GM12878 (cell line): ENCODE measurements at regions of chr13 and their contacts with region 1.

Region 1: DNA sequence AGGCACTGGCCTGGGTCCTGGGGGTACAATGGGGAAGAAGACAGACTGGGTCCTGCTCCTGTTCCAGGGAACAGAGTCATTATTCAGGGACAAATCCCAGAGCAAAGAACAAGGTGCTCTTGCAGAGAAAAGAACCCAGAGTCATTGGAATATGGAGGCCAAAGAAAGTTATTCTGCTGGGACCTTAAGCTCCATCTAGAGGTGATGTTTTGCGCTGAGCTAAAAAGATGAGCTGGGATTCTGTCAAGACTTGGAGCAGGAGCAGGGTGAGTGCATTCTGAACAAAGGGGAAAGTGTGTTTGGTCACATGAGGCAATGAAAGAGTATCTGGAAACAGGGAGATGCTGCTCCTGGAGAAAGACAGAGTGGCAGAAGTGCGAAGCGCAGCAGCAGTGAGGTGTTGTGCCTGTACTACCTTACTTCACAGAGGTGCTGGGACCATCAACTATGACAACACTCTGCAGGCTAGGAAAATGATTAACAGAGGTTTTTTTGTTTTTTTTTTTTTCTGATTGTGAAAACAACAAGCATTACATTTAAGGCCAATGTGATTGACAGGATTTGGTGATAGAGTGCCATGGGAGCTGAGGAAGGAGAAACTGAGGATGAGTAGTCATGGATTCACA is 95.3 kb upstream of the TNFSF11 start:
- DNase-seq: no peak
- ATAC-seq: peak; percentile 90
- H3K4me3 ChIP-seq: no peak overlapping the region
- H3K27ac ChIP-seq: no peak overlapping the region
- H3K4me1 ChIP-seq: 0 out of 2 replicates have a peak, but pooled peaks cover 3% of the 10 kb centered on the region
- H3K27me3 ChIP-seq: no peaks in the 10 kb centered on the region
- CTCF ChIP-seq: peak; percentile 46 to 58 (median 47); a peak in 5 of 6 replicates
- EP300 ChIP-seq: no peak
- POLR2A ChIP-seq: no peak
- RAD21 ChIP-seq: peak; percentile 83

Region 2: GRCh38 chr13:41543664-41544300 is 934.9 kb before region 1 on chr13:
- CTCF ChIA-PET with region 1: no interaction called
- POLR2A ChIA-PET with region 1: no interaction called
- RAD21 ChIA-PET with region 1: no interaction called
- SMC1A ChIA-PET with region 1: no interaction called
- in situ Hi-C with region 1: no loop called
- intact Hi-C with region 1: no loop called
- DNase-seq: no peak
- ATAC-seq: no peak
- H3K4me3 ChIP-seq: no peak overlapping the region
- H3K27ac ChIP-seq: no peak overlapping the region
- H3K4me1 ChIP-seq: no peaks in the 10 kb centered on the region
- H3K27me3 ChIP-seq: no peaks in the 10 kb centered on the region
- CTCF ChIP-seq: no peak
- EP300 ChIP-seq: no peak
- POLR2A ChIP-seq: no peak
- RAD21 ChIP-seq: no peak

Region 3: GRCh38 chr13:42271337-42272114 is 207.1 kb before region 1 on chr13:
- CTCF ChIA-PET with region 1: interaction called, 5 read pairs
- POLR2A ChIA-PET with region 1: no interaction called
- RAD21 ChIA-PET with region 1: interaction called, 4 read pairs
- SMC1A ChIA-PET with region 1: interaction called, 21 read pairs
- in situ Hi-C with region 1: no loop called
- intact Hi-C with region 1: no loop called
- DNase-seq: peak; percentile 94
- ATAC-seq: peak; percentile 83
- H3K4me3 ChIP-seq: peak overlapping the region; percentile 90
- H3K27ac ChIP-seq: peak overlapping the region; percentile 77
- H3K4me1 ChIP-seq: peaks cover 12% of the 10 kb centered on the region
- H3K27me3 ChIP-seq: no peaks in the 10 kb centered on the region
- CTCF ChIP-seq: no peak
- EP300 ChIP-seq: peak in 1 of 2 experiments; percentile 65; a peak in 1 of 4 replicates
- POLR2A ChIP-seq: no peak
- RAD21 ChIP-seq: no peak

Region 4: GRCh38 chr13:42333613-42334328 is 144.9 kb before region 1 on chr13:
- CTCF ChIA-PET with region 1: interaction called, 67 read pairs
- POLR2A ChIA-PET with region 1: interaction called, 4 read pairs
- RAD21 ChIA-PET with region 1: interaction called, 85 read pairs
- SMC1A ChIA-PET with region 1: interaction called, 83 read pairs
- in situ Hi-C with region 1: no loop called
- intact Hi-C with region 1: loop called (anchors 1 kb)
- DNase-seq: no peak
- ATAC-seq: peak; percentile 92
- H3K4me3 ChIP-seq: no peak overlapping the region
- H3K27ac ChIP-seq: peak overlapping the region; percentile 73
- H3K4me1 ChIP-seq: peaks cover 18% of the 10 kb centered on the region
- H3K27me3 ChIP-seq: no peaks in the 10 kb centered on the region
- CTCF ChIP-seq: peak; percentile 74 to 87 (median 83); a peak in 5 of 6 replicates
- EP300 ChIP-seq: no peak
- POLR2A ChIP-seq: no peak
- RAD21 ChIP-seq: peak; percentile 98

Region 5: DNA sequence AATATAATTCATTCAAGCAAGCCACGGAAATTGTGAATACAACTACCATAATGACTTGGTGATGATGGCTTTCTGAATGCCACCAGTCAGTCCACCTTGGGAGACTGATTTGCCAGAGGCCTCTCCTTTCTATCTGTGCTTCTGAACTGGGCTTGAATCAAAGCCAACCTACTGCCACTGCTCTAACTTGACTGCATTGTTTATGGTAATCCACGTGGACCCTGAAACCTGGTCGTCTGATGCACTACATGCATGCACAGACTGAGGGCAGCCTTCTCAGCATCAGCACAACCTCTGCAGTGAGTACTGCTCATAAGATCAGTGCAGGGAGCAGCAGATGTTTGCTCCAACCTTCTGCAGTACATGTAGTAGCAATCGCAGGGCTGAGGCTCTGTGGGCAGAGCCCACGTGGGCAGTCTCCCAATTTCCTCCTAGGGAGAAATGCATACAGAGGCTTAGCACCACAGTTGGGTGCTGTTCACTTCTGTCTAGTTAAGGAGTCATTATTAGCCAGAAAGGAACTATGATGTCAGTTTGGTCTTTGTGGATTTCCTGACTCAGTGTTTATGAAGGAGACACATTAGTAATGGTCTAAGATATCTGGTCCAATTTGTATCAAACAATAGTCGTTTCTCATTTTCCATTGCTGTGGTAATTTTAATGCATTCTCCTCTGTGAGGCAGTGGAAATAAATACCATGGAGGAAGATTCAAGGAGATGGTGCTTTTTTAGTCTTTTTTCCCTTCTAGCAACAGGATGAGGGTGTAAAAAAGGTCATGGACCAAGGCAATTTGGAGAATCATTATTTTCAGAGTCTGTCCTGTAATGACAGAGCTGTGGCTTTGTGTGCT is 124.2 kb before region 1 on chr13:
- CTCF ChIA-PET with region 1: interaction called, 12 read pairs
- POLR2A ChIA-PET with region 1: interaction called, 3 read pairs
- RAD21 ChIA-PET with region 1: interaction called, 6 read pairs
- SMC1A ChIA-PET with region 1: interaction called, 15 read pairs
- in situ Hi-C with region 1: no loop called
- intact Hi-C with region 1: no loop called
- DNase-seq: peak; percentile 53
- ATAC-seq: peak; percentile 92
- H3K4me3 ChIP-seq: no peak overlapping the region
- H3K27ac ChIP-seq: peak overlapping the region; percentile 52
- H3K4me1 ChIP-seq: peaks cover 18% of the 10 kb centered on the region
- H3K27me3 ChIP-seq: no peaks in the 10 kb centered on the region
- CTCF ChIP-seq: peak; percentile 23 to 49 (median 46); a peak in 5 of 6 replicates
- EP300 ChIP-seq: no peak
- POLR2A ChIP-seq: no peak
- RAD21 ChIP-seq: peak; percentile 56

Region 6: DNA sequence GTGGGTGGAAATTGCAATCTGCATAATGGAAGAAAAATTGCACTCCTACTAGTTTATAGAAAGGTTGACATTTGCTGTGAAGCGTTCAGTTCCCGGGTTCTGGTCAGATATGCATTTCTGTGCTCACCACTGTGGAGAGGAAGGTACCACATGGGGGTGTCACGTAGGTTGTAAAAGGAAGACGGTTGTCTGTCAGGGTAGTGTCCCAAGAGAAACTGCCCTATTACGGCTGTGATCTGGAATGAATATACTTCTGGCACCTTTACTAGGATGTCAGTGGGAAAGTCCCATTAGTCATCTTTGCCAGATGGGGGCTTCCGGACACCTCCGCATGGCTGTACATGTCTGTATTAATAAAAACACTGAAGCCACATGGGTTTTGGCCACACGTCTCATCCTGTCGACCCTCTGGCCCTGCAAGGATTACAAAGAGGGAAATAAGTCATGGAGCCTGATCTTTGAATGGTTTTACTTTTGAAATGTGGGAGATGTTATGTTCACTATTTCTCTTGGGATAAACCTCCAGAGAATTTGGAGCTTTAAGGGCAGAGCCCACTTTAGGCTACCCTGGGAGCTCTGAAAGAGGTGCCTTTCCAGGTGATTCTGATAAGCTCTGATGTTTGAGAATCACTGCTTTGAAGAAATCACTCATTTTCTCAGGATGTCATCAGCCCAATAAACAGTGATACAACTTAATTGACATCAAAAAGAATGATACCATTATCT is 72.8 kb before region 1 on chr13:
- CTCF ChIA-PET with region 1: interaction called, 15 read pairs
- POLR2A ChIA-PET with region 1: no interaction called
- RAD21 ChIA-PET with region 1: interaction called, 12 read pairs
- SMC1A ChIA-PET with region 1: interaction called, 11 read pairs
- in situ Hi-C with region 1: no loop called
- intact Hi-C with region 1: loop called (anchors 5 kb)
- DNase-seq: peak; percentile 97
- ATAC-seq: peak; percentile 90
- H3K4me3 ChIP-seq: peak overlapping the region; percentile 31; the same call in 1 of the 2 replicates
- H3K27ac ChIP-seq: peak overlapping the region; percentile 98
- H3K4me1 ChIP-seq: peaks cover 54% of the 10 kb centered on the region
- H3K27me3 ChIP-seq: no peaks in the 10 kb centered on the region
- CTCF ChIP-seq: 0 out of 6 replicates have a peak, but pooled peaks of 1 of the 3 experiments have one; percentile 5
- EP300 ChIP-seq: peak; percentile 86 to 97
- POLR2A ChIP-seq: peak; percentile 48; the same call in 1 of the 2 replicates
- RAD21 ChIP-seq: peak; percentile 45

Region 7: DNA sequence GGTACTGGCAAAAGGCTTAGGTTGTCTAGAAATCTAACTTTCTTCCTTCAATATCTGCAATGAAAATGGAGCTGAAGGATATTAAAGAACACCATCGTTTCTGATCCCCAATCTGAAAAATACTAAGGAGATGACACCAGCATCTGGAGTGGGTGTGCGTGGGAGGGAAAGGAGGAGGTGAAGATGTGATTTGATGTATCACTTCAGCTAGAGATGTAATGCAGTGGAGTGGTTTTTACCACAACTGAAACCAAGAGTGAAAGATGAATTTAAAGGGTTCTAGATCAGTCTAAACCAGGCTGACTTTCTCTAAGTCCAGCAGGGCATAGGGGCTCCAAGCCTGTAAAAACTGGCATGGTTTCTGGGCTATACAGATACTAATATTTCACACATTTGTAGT is 58.3 kb before region 1 on chr13:
- CTCF ChIA-PET with region 1: interaction called, 15 read pairs
- POLR2A ChIA-PET with region 1: no interaction called
- RAD21 ChIA-PET with region 1: interaction called, 12 read pairs
- SMC1A ChIA-PET with region 1: interaction called, 25 read pairs
- in situ Hi-C with region 1: no loop called
- intact Hi-C with region 1: no loop called
- DNase-seq: peak; percentile 68
- ATAC-seq: peak; percentile 95
- H3K4me3 ChIP-seq: no peak overlapping the region
- H3K27ac ChIP-seq: peak overlapping the region; percentile 50; the same call in 1 of the 2 replicates
- H3K4me1 ChIP-seq: peaks cover 32% of the 10 kb centered on the region
- H3K27me3 ChIP-seq: no peaks in the 10 kb centered on the region
- CTCF ChIP-seq: no peak
- EP300 ChIP-seq: peak in 1 of 2 experiments; percentile 64; a peak in 1 of 4 replicates
- POLR2A ChIP-seq: no peak
- RAD21 ChIP-seq: no peak; the same call in 1 of the 2 replicates

Region 8: DNA sequence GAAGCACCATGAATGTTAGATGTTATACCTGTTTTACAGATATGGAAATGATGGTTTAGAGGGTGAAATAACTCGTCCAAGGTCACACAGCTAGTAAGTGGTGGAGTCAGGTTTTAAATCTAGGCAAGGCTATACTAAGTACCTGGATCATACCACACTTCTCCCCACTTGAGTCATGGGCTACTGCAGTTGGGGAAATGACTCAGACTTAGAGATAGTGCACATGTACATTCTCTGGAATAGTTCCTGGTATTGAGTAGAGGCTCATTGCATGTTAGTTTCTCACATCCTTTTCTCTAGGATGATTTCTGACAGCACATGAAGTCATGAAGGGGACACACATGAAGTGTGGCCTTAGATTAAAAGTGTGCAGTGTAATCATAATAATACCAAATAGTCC is 19.2 kb after region 1 on chr13:
- CTCF ChIA-PET with region 1: interaction called, 7 read pairs
- POLR2A ChIA-PET with region 1: no interaction called
- RAD21 ChIA-PET with region 1: interaction called, 3 read pairs
- SMC1A ChIA-PET with region 1: interaction called, 24 read pairs
- in situ Hi-C with region 1: no loop called
- intact Hi-C with region 1: no loop called
- DNase-seq: peak; percentile 88
- ATAC-seq: peak; percentile 90
- H3K4me3 ChIP-seq: no peak overlapping the region
- H3K27ac ChIP-seq: peak overlapping the region; percentile 85
- H3K4me1 ChIP-seq: peaks cover 33% of the 10 kb centered on the region
- H3K27me3 ChIP-seq: no peaks in the 10 kb centered on the region
- CTCF ChIP-seq: no peak
- EP300 ChIP-seq: peak in 1 of 2 experiments; percentile 69; a peak in 1 of 4 replicates
- POLR2A ChIP-seq: no peak
- RAD21 ChIP-seq: peak; percentile 36; the same call in 1 of the 2 replicates

Region 9: DNA sequence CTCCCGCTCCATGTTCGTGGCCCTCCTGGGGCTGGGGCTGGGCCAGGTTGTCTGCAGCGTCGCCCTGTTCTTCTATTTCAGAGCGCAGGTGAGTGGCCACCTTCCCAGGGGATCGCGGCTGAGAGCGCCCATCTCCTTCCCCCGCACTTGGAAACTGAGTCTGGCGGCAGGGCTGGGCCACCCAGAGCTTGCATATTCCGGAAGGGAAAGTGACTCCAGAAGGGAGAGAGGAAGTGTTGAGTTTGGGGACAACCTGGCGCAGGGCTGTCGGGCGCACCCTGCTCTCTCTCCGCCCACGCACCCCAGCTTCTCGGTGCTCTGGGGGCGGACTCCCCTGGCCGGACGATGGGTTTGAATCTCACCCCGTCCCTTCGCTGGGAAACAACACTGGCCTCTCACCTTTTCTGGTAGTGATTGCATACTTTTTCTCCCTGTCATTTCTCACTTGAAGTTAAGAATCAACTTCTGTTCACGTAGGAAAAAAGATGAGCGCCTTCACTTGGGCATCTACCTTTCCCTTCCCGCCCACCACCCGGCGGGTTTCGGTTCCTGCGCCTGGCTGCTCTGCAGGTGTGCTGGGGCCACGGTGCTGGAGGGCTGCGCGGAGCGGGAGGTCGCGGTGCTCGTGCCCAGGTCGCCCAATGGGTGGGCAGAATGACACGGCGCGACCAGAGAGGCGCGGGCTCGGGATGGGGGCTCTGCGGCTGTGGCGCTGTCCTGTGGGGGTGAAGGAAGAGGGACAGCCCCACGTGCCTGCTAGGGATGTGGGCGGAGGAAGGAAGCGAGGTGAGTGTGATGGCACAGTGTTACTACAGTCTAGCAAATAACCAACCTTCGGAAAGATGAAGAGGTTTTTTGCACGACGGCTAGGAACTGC is 96.0 kb after region 1 on chr13:
- CTCF ChIA-PET with region 1: no interaction called
- POLR2A ChIA-PET with region 1: no interaction called
- RAD21 ChIA-PET with region 1: no interaction called
- SMC1A ChIA-PET with region 1: no interaction called
- in situ Hi-C with region 1: no loop called
- intact Hi-C with region 1: no loop called
- DNase-seq: no peak
- ATAC-seq: peak; percentile 82
- H3K4me3 ChIP-seq: peak overlapping the region; percentile 74
- H3K27ac ChIP-seq: peak overlapping the region; percentile 74
- H3K4me1 ChIP-seq: peaks cover 4% of the 10 kb centered on the region
- H3K27me3 ChIP-seq: no peaks in the 10 kb centered on the region
- CTCF ChIP-seq: no peak
- EP300 ChIP-seq: no peak
- POLR2A ChIP-seq: peak; percentile 65
- RAD21 ChIP-seq: 0 out of 2 replicates have a peak, but pooled peaks have one; percentile 8

Region 10: DNA sequence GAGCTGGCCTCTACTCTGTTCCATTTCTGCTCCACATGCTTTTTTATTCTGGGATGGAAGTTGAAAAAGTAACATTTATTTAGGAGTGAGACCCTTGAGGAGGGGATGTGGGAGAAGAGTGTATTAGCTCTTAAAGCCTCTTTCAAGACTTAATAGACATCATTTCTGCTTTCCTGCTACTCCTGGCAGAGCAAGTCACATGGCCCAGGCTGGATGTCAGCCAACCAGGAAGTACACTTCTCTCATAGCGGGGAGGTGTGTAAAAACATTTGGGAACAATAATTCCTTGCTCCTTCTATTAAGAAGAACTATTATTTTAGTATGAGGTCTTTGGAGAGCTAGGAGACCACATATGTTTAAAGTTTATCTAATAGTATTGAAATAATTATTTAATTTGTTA is 262.1 kb after region 1 on chr13:
- CTCF ChIA-PET with region 1: no interaction called
- POLR2A ChIA-PET with region 1: no interaction called
- RAD21 ChIA-PET with region 1: no interaction called
- SMC1A ChIA-PET with region 1: no interaction called
- in situ Hi-C with region 1: no loop called
- intact Hi-C with region 1: no loop called
- DNase-seq: no peak
- ATAC-seq: no peak
- H3K4me3 ChIP-seq: no peak overlapping the region
- H3K27ac ChIP-seq: no peak overlapping the region
- H3K4me1 ChIP-seq: no peaks in the 10 kb centered on the region
- H3K27me3 ChIP-seq: no peaks in the 10 kb centered on the region
- CTCF ChIP-seq: no peak
- EP300 ChIP-seq: no peak
- POLR2A ChIP-seq: no peak
- RAD21 ChIP-seq: no peak